Activated naive CD4-positive, alpha-beta T cell treated with anti-CD3 and anti-CD28 coated beads for 36 hours (primary cell): ENCODE measurements at regions of chr2 and their contacts with region 1.

Region 1: GRCh38 chr2:135985018-135985825 is at the start of gene DARS1:
- DNase-seq: peak; percentile 90
- H3K4me3 Mint-ChIP-seq: peak within 1 kb of the TSS; percentile 95
- H3K27ac Mint-ChIP-seq: peak within 1 kb of the TSS; percentile 97
- H3K4me1 Mint-ChIP-seq: peaks cover 39% of the 10 kb centered on the region
- H3K27me3 Mint-ChIP-seq: no peaks in the 10 kb centered on the region
- total RNA-seq, gene DARS1: 161 to 177 TPM

Region 2: DNA sequence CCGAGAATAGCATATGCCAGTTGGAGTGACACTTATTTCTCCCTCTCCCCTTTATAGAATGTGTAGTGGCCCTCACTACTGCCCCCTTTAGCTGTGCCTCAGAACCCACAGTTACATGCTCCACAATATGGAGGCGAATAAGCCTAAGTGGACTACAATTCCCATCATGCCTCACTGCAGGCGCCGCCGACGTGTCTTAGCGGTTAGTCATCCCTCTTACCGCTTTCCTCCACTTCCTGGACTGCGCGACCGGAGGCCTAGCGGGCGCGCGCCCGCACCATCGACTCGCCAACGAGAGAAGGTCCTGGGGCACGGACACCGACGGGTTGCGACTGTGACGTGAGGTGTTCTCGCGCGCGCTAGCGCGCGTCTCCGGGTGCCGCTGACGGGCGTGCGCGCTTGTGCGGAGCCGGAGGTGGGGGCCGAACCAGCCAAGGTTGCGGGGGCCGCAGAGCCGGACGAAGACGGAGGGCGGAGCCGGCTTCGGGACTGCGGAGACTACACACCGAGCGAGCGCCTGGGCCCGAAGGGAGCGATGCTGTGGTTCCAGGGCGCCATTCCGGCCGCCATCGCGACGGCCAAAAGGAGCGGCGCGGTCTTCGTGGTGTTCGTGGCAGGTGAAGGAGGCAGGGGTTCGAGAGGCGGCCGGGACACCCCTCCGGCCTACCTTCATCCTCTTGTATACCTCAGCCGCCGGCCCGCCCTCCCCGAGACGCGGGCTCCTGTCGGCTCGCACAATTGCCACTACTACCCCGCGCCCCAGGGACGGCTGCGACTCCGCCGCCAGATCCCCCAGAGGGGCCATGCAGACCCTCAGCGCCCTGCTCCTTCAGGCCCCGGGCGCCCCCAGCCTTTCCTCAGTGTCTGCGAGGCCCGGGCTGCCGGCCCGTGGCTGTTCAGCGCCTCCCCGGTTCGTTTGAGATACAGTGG is 243.6 kb before region 1 on chr2 and contains the start of gene UBXN4:
- CTCF ChIA-PET with region 1: no interaction called
- intact Hi-C with region 1: loop called (anchors 5 kb)
- DNase-seq: peak; percentile 98
- H3K4me3 Mint-ChIP-seq: peak within 1 kb of the TSS; percentile 98
- H3K27ac Mint-ChIP-seq: peak within 1 kb of the TSS; percentile 99
- H3K4me1 Mint-ChIP-seq: peaks cover 30% of the 10 kb centered on the region
- H3K27me3 Mint-ChIP-seq: no peaks in the 10 kb centered on the region
- total RNA-seq, gene UBXN4: 100 to 105 TPM

Region 3: DNA sequence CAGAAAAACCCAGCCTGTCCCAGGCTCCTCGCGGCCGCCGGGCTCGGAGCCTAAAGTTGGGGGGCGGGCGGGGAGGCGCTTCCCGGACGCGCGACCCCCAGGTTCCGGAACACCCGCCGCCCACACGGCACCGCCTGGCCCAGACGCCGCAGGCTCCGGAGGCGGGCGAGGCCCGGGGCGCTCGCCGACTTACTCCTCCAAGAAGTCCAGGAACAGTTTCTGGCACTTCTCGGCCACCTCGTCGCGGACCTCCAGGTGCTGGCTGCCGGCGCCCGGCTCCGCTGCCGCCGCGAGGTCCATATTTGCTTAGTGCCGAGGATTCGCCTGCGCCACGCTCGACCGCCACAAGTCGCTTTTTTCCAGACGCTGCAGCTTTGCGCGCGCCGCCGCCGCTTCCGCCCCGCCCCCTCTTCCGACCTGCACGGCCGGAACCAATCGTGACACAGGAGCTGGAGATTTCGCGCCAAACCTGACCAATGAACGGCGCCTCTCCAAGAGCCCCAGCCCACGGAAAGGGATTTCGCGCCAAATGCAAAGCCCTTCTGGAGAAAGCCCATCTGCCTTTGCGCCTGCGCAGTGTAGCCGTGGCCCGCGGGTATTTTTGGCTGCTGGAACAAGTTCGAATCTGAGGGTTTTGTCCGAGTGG is 109.0 kb before region 1 on chr2 and contains the start of gene MCM6:
- CTCF ChIA-PET with region 1: no interaction called
- intact Hi-C with region 1: loop called (anchors 1 kb)
- DNase-seq: peak; percentile 100
- H3K4me3 Mint-ChIP-seq: peak within 1 kb of the TSS; percentile 91
- H3K27ac Mint-ChIP-seq: peak within 1 kb of the TSS; percentile 99
- H3K4me1 Mint-ChIP-seq: peaks cover 39% of the 10 kb centered on the region
- H3K27me3 Mint-ChIP-seq: no peaks in the 10 kb centered on the region
- total RNA-seq, gene MCM6: 221 to 226 TPM

Region 4: DNA sequence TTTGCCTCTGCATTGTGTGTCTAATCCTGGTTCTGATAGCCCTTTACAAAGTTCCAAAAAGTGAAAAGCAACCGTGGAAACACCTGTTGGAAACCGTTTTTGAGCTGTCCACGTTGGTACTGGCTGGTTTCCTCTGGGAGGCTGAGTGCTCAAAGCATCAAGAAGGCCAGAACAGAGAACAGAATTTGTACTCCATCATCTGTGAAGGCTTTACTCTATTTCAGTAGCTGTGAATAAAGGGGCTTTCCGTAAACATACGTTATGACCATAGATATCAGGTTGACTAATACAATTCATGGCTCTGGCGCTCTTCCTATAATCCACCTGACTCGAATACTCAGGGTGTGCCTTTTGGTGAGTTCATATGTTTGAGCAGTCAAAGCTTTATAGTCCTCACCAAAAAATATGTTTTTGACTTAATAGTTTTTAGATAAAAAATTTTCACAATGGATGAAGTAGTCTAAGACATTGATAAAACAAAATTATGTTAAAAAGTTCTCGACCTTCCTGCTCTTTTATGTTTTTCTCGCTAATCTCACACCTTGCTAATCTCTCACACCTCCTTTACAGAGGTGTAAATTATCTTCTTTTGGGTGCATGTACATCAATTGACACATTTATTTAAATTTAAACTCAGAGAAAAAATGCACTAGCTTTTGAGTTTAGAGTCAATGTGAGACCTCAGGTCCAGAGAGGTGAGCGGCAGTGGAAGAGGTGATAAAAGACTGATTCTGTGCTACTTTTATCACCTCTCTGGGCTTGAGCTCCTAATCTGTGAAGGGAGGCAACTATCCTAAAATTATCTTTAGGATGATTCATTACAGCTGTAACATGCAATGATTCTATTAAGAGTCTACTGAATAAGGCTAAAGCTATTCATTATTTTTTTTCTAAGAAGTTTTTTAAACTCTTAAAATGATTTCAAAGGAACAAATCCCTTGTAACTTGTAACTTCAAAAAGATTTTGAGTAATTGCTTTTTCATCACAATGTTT is 67.4 kb after region 1 on chr2:
- CTCF ChIA-PET with region 1: interaction called, 5 read pairs
- intact Hi-C with region 1: loop called (anchors 1 kb)
- DNase-seq: peak; percentile 53
- H3K4me3 Mint-ChIP-seq: peak overlapping the region; percentile 53
- H3K27ac Mint-ChIP-seq: peak overlapping the region; percentile 96
- H3K4me1 Mint-ChIP-seq: peaks cover 88% of the 10 kb centered on the region
- H3K27me3 Mint-ChIP-seq: no peaks in the 10 kb centered on the region

Region 5: DNA sequence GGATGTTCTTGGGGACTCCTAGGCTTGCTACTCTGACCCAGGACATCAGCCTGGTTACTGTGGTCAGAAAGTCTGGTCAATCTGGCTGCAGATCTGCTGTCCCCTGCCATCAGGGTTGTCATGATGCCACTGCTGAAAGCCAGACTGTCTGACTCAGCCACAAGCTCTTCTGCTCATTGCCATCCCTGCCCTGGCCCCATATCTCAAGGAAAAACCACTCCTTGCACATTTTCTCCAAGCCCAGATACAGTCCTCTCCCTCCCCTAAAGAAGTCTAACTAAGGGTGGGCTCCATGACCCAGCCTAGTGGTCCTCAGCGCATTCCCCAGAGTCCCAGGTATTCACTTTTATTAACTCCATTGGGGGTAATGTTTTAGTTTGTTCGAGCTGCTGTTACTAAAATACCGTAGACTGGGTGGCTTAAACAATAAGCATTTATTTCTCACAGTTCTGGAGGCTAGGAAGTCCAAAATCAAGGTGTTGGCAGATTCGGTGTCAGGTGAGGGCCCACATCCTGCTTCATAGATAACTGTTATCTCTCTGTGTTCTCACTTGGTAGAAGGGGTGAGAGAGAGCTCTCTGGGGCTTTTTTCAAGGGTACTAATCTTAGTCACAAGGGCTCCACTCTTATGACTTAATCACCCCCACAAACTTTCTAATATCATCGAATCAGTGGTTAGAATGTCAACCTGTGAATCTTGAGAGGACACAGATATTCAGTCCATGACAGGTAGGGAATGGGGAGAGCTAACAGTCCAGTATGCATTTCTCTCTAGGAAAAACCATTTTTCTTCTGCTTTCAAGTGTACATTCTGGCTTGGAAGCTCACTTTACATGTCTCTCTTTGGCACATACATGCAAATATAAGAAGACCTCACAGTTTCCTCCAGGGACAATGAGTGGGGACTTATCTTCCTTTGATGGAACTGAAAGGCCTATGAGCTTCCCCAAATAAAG is 227.5 kb after region 1 on chr2:
- CTCF ChIA-PET with region 1: no interaction called
- intact Hi-C with region 1: loop called (anchors 5 kb)
- DNase-seq: peak; percentile 67
- H3K4me3 Mint-ChIP-seq: no peak overlapping the region
- H3K27ac Mint-ChIP-seq: peak overlapping the region; percentile 3
- H3K4me1 Mint-ChIP-seq: peaks cover 43% of the 10 kb centered on the region
- H3K27me3 Mint-ChIP-seq: no peaks in the 10 kb centered on the region